ENCODE measurements at regions of chr4 and their contacts with region 1.

Region 1: DNA sequence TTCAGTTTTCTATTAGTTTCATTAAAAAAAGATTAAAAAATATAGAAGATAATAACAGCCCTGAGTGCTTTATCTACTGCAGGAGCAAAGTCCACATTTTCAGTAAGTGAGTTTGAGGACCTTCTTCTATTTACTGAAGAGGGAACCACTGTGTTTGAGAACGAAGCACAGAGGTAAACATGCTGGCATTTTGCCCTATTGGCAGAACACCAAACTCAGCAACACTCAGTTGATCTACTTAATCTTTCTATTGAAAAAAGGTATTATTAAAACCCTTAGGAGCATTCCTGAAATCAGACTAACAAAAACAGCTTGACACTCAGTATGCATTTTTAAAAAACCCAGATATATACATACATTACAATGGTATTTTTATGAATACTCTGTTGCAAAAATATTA is 1496.7 kb downstream of the TECRL start:
- DNase-seq: no peak
- H3K4me3 ChIP-seq: no peak overlapping the region
- H3K27ac ChIP-seq: no peak overlapping the region
- H3K4me1 ChIP-seq: no peaks in the 10 kb centered on the region
- H3K27me3 ChIP-seq: no peaks in the 10 kb centered on the region
- CTCF ChIP-seq: no peak
- POLR2A ChIP-seq: no peak

Region 2: GRCh38 chr4:63155561-63155960 is 243.0 kb after region 1 on chr4:
- intact Hi-C with region 1: loop called (anchors 5 kb)
- DNase-seq: no peak
- H3K4me3 ChIP-seq: no peak overlapping the region
- H3K27ac ChIP-seq: no peak overlapping the region
- H3K4me1 ChIP-seq: no peaks in the 10 kb centered on the region
- H3K27me3 ChIP-seq: no peaks in the 10 kb centered on the region
- CTCF ChIP-seq: no peak
- POLR2A ChIP-seq: no peak